ENCODE measurements at regions of chr9 and their contacts with region 1.

Region 1: GRCh38 chr9:35864695-35865255 is 5.4 kb downstream of the OR13J1 start:
- DNase-seq: no peak
- H3K4me3 ChIP-seq: no peak overlapping the region
- H3K27ac ChIP-seq: no peak overlapping the region
- H3K4me1 ChIP-seq: no peaks in the 10 kb centered on the region
- H3K27me3 ChIP-seq: peaks cover 8 to 24% of the 10 kb centered on the region in 2 experiments
- CTCF ChIP-seq: no peak
- POLR2A ChIP-seq: no peak

Region 2: DNA sequence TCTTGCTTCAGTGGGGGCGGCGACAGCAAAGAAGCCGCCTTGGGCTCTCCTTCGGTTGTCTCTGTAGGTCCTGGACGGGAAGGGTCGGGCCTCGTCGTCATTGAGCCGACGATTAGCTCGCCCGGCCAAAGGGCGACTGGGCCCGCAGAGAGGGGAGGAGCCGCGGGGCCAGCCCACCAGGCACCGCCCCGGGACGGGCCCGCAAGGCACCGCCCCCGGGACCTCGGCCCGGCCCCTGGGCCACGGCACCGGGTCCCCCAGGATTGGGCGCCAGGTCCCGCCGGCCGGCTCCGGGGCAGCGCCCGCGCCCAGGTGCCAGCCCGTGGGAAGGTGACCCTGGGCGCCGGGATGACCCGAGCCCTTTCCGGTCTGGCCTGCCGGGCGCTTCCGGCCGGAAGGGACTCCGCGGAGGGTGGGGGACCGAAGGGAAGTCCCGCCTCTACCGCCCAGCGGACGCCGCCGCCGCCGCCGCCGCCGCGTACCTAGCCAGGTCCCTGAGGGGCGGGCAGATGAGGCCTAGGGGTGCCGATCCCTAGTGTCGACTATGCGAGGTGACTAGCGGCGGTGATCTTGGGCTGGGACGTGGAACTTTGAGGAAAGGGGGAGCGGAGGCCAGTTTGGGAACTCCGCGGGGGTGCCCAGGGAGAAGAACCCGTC is 115.8 kb before region 1 on chr9 and contains the starts of genes GBA2 and RGP1:
- CTCF ChIA-PET with region 1: no interaction called
- POLR2A ChIA-PET with region 1: no interaction called
- dilution Hi-C with region 1: no loop called
- intact Hi-C with region 1: no loop called
- DNase-seq: peak; percentile 75
- H3K4me3 ChIP-seq: peak within 1 kb of the TSS; percentile 66 to 99 (median 87)
- H3K27ac ChIP-seq: peak within 1 kb of the TSS; percentile 84
- H3K4me1 ChIP-seq: peaks cover 69% of the 10 kb centered on the region
- H3K27me3 ChIP-seq: no peaks in the 10 kb centered on the region
- CTCF ChIP-seq: no peak
- POLR2A ChIP-seq: peak; percentile 72
- total RNA-seq, gene GBA2: 158 and 196 TPM in 2 replicates
- total RNA-seq, gene RGP1: 23.3 and 29.0 TPM in 2 replicates

Region 3: DNA sequence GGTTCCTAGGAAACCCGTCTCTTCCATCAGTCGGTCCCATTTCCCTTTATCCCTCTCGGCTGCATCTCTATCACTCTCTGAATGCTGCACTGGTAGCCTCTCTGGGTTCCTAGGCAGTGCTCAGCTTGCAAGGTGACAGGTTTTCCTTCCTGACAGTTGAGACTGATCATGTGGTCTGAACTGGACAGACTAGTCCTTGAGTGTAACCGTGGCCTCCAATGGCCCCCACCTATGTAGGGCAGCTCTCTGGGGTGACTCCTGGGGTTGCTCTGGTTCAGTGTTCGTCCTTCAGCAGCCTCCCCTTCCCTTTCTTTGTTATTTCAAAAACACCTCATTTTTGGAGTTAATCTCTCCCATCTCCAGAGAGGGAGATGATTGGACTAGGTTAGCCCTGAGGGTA is 31.9 kb before region 1 on chr9:
- CTCF ChIA-PET with region 1: no interaction called
- POLR2A ChIA-PET with region 1: no interaction called
- dilution Hi-C with region 1: no loop called
- intact Hi-C with region 1: no loop called
- DNase-seq: no peak
- H3K4me3 ChIP-seq: no peak overlapping the region
- H3K27ac ChIP-seq: no peak overlapping the region
- H3K4me1 ChIP-seq: peaks cover 9% of the 10 kb centered on the region
- H3K27me3 ChIP-seq: no peaks in the 10 kb centered on the region
- CTCF ChIP-seq: no peak
- POLR2A ChIP-seq: no peak

Region 4: DNA sequence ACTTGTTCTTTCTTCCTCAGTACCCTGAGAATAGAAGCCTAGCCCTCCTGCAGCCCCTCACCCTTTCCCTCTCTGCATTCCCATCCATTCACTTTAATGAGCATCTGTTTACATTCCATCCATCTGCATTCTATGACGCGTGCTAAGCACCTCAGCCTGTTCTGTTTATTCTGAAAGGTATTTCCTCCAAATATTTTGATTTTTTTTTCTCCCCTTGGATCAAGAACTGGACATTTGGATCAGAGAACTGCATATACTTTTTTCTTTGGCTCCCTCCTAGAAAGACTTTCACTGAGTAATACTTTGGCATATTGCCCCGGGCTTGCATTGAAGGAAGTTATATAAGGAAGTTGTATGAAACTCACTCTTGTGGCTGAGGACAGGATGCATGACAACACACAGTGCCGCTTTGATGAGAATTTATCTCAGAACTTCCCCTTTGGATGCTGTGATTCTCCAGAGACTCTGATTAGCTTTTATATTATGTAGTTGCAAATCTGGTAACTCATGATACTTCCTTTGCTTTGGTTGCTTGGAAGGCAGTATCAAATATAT is 20.0 kb before region 1 on chr9:
- CTCF ChIA-PET with region 1: interaction called, 3 read pairs
- POLR2A ChIA-PET with region 1: no interaction called
- dilution Hi-C with region 1: no loop called
- intact Hi-C with region 1: loop called (anchors 2 kb)
- DNase-seq: peak; percentile 83
- H3K4me3 ChIP-seq: no peak overlapping the region
- H3K27ac ChIP-seq: no peak overlapping the region
- H3K4me1 ChIP-seq: peaks cover 16% of the 10 kb centered on the region
- H3K27me3 ChIP-seq: peaks cover 0 to 11% of the 10 kb centered on the region in 2 experiments
- CTCF ChIP-seq: no peak
- POLR2A ChIP-seq: no peak

Measured in endothelial cell of umbilical vein (primary cell).